Activated T-helper 1 cell treated with anti-CD3 and anti-CD28 coated beads, Interleukin-12 subunit alpha, Interleukin-12 subunit beta, Interleukin-2, Interleukin-4 antibody, amounts not matched to agents 30 ng/mL and 10 ng/mL and 1 ng/mL, durations not matched to agents 14 hours and 24 hours and 36 hours (primary cell): ENCODE measurements at regions of chr9 and their contacts with region 1.

Region 1: DNA sequence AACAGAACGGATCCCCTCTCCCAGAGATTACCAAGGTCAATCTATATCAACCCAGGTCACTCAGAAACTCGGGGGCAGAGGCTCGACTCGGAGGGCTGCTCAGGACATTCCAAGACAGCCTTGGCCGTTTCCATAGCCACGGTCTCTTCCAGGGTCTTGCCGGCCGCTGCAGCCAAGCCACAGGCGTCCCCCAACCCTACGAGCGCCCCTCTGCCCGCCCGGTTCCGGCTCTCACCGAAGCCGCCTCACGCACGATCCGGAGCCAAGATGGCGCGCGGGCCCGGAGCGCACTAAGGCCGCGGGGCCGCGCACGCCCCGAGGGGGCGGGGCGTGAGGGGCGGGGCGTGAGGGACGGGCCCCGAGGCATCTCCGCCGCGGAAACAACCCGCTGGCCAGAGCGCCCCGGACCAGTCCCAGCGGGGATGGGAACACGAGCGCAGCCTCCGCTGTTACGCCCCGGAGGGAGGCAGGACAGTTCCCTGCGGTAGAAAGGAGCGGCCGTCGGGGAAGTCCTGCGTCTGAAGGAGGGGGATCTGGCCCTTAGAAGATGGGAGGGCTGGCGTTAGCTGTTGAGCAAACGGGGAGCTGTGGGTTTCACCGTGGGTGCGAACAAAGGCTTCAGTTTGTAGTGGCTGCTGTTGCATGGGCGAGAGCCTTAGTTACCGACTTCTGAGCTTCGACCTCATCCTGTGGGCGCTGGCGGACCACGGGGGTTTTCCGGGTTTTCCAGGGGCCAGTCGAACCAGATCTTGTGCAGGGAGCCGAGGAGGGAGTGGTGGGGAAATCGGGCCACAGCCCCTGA is at the start of gene RPP25L:
- DNase-seq: peak; percentile 84
- H3K4me3 Mint-ChIP-seq: peak within 1 kb of the TSS; percentile 95
- H3K27ac Mint-ChIP-seq: peak within 1 kb of the TSS; percentile 96
- H3K4me1 Mint-ChIP-seq: peaks cover 24% of the 10 kb centered on the region
- H3K27me3 Mint-ChIP-seq: no peaks in the 10 kb centered on the region
- total RNA-seq, gene RPP25L: 37.5 and 40.2 TPM in 2 replicates

Region 2: DNA sequence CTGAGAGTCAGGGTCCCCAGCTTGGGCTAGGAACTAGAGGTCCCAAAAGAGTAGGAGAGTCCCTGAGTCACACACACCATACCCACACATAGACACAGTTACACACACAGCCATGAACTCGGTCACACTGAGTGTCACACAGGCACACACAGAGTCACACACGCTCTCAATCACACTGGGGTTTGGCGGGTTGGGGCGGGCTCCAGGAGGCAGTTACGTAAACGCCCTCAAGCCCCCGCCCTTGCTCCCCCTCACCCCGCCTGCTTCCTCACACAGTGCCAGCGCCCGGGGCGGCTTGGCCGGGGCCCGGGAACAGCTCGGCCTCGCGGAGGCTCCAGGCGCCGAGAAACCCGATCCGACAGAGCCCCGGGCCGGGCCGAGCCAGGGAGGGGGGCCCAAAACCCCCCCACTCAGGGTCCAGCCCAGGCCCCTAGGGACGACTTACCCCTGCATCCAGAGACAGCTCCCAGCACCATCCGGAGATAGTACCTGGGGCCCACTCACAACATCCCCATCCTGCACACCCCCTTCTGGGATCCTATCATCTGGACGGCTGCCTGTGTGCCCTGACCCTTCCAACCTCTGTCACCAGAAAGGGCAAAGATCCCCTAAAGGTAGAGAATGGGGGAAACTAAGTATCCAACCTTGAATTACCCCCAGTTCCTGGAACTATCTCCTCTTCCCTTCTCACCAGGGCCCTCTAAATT is 19.0 kb before region 1 on chr9:
- intact Hi-C with region 1: no loop called
- DNase-seq: no peak
- H3K4me3 Mint-ChIP-seq: peak overlapping the region; percentile 50
- H3K27ac Mint-ChIP-seq: no peak overlapping the region
- H3K4me1 Mint-ChIP-seq: peaks cover 15% of the 10 kb centered on the region
- H3K27me3 Mint-ChIP-seq: peaks cover 54% of the 10 kb centered on the region

Region 3: GRCh38 chr9:34628656-34629491 is 16.8 kb after region 1 on chr9 and contains the start of gene ARID3C:
- intact Hi-C with region 1: loop called (anchors 1 kb)
- DNase-seq: no peak
- H3K4me3 Mint-ChIP-seq: peak within 1 kb of the TSS; percentile 80
- H3K27ac Mint-ChIP-seq: peak within 1 kb of the TSS; percentile 26
- H3K4me1 Mint-ChIP-seq: peaks cover 17% of the 10 kb centered on the region
- H3K27me3 Mint-ChIP-seq: peaks cover 57% of the 10 kb centered on the region
- total RNA-seq, gene ARID3C: 0.23 TPM in 1 of 2 replicates, not detected in the other

Region 4: GRCh38 chr9:34637356-34638137 is 25.5 kb after region 1 on chr9 and contains the start of gene SIGMAR1:
- intact Hi-C with region 1: loop called (anchors 1 kb)
- DNase-seq: peak; percentile 94
- H3K4me3 Mint-ChIP-seq: peak within 1 kb of the TSS; percentile 97
- H3K27ac Mint-ChIP-seq: peak within 1 kb of the TSS; percentile 88
- H3K4me1 Mint-ChIP-seq: peaks cover 39% of the 10 kb centered on the region
- H3K27me3 Mint-ChIP-seq: no peaks in the 10 kb centered on the region
- total RNA-seq, gene SIGMAR1: 128 and 130 TPM in 2 replicates

Region 5: GRCh38 chr9:34646211-34647083 is 34.4 kb after region 1 on chr9 and contains the start of gene GALT:
- intact Hi-C with region 1: loop called (anchors 1 kb)
- DNase-seq: peak; percentile 95
- H3K4me3 Mint-ChIP-seq: peak within 1 kb of the TSS; percentile 96
- H3K27ac Mint-ChIP-seq: peak within 1 kb of the TSS; percentile 88
- H3K4me1 Mint-ChIP-seq: peaks cover 33% of the 10 kb centered on the region
- H3K27me3 Mint-ChIP-seq: no peaks in the 10 kb centered on the region
- total RNA-seq, gene GALT: 72.0 and 73.7 TPM in 2 replicates